ENCODE measurements at regions of chr3 and their contacts with region 1.

Region 1: GRCh38 chr3:196274585-196274984 is 12.9 kb downstream of the PCYT1A start:
- DNase-seq: peak; percentile 81
- H3K4me3 Mint-ChIP-seq: peak overlapping the region; percentile 53
- H3K27ac Mint-ChIP-seq: peak overlapping the region; percentile 90
- H3K4me1 Mint-ChIP-seq: peaks cover 67% of the 10 kb centered on the region
- H3K27me3 Mint-ChIP-seq: no peaks in the 10 kb centered on the region

Region 2: GRCh38 chr3:196287440-196288148 is 13.0 kb after region 1 on chr3 and contains the start of gene PCYT1A:
- CTCF ChIA-PET with region 1: no interaction called
- POLR2A ChIA-PET with region 1: no interaction called
- intact Hi-C with region 1: loop called (anchors 1 kb)
- DNase-seq: peak; percentile 87
- H3K4me3 Mint-ChIP-seq: peak within 1 kb of the TSS; percentile 100
- H3K27ac Mint-ChIP-seq: peak within 1 kb of the TSS; percentile 98
- H3K4me1 Mint-ChIP-seq: peaks cover 39% of the 10 kb centered on the region
- H3K27me3 Mint-ChIP-seq: no peaks in the 10 kb centered on the region
- total RNA-seq, gene PCYT1A: 46.8 to 48.6 TPM

Region 3: DNA sequence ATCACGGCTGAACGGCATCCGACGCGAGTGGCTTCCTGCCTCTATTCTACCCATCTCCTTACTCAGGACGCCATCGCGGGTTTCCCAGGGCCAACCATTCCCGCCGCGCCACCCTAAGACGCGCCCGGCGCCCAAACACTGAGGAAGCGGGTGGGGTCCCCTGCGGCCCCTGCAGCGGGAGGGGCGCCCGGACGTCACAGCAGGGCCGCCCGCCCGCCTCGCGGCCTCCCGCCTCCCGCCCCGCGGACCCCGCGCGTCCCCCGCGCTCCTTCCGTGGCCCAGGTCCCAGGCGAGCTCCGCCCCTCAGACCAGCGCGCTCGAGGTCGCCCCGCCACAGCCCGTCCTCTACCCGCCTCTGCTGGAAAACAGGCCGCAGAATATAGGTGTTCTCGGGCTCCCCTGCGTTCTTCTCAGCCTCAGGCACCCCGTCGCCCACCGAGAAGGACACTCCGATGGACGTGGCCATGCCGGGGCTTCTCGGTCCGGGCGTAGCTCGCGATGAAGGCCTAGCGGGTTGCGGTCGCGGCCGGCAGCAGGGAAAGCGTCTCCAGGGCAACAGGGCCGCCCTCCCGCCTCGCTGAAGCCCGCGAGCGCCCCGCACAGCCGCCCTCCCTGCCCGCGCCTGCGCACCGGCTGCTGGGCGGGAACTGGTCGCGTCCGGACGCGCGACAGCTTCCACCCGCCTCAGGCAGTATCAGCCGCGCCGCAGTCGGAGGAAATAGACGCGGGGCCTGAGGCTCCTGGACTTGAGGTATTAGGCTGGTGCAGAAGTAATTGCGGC is 43.3 kb after region 1 on chr3 and contains the start of gene DYNLT2B:
- CTCF ChIA-PET with region 1: interaction called, 4 read pairs
- POLR2A ChIA-PET with region 1: interaction called, 4 read pairs
- intact Hi-C with region 1: loop called (anchors 1 kb)
- DNase-seq: peak; percentile 92
- H3K4me3 Mint-ChIP-seq: peak within 1 kb of the TSS; percentile 97
- H3K27ac Mint-ChIP-seq: peak within 1 kb of the TSS; percentile 95
- H3K4me1 Mint-ChIP-seq: peaks cover 7% of the 10 kb centered on the region
- H3K27me3 Mint-ChIP-seq: no peaks in the 10 kb centered on the region
- total RNA-seq, gene DYNLT2B: 15.8 to 17.1 TPM

Region 4: DNA sequence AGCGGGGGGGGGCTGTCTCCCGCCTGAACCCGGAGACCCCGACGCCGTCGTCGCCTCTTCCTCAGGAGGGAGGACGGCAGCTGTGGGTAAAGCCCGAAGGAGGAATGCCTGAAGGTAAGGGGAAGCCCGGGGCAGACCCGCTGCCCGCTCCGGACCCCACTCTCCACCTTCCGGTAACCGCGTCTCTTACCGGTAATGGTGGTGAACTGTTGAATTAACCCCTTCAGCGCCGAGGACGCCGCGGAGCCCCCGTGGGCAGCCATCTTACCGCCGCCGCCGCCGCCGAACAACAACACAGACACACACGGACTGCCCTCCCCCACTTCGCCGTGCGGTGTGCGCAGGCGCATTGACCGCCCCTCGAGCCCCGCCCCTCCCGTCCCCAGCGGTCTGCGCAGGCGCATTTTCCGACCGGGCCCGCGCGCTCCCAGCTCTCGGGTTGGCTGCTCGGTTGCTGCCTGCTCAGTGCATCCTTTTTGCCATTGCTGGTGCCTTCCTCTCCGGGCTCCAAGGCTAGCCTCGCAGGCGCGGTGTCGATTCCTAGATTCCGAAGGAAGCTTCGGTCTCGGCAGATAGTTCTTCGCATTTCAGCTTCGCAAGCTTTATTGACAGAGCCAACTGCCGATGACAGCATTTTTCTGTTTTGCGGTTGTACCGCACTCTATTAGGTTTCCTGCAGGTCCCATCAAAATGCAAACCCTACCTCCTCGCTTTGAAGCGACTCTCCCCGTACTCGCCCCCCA is 157.7 kb after region 1 on chr3 and contains the start of gene UBXN7:
- CTCF ChIA-PET with region 1: no interaction called
- POLR2A ChIA-PET with region 1: no interaction called
- intact Hi-C with region 1: loop called (anchors 1 kb)
- DNase-seq: peak; percentile 98
- H3K4me3 Mint-ChIP-seq: peak within 1 kb of the TSS; percentile 75
- H3K27ac Mint-ChIP-seq: peak within 1 kb of the TSS; percentile 90
- H3K4me1 Mint-ChIP-seq: peaks cover 13% of the 10 kb centered on the region
- H3K27me3 Mint-ChIP-seq: no peaks in the 10 kb centered on the region
- total RNA-seq, gene UBXN7: 58.1 to 61.1 TPM

Region 5: GRCh38 chr3:196596355-196596754 is 321.8 kb after region 1 on chr3:
- CTCF ChIA-PET with region 1: no interaction called
- POLR2A ChIA-PET with region 1: no interaction called
- intact Hi-C with region 1: no loop called
- DNase-seq: no peak
- H3K4me3 Mint-ChIP-seq: no peak overlapping the region
- H3K27ac Mint-ChIP-seq: no peak overlapping the region
- H3K4me1 Mint-ChIP-seq: peaks cover 10% of the 10 kb centered on the region
- H3K27me3 Mint-ChIP-seq: peaks cover 9% of the 10 kb centered on the region